ENCODE measurements at regions of chr6 and their contacts with region 1.

Region 1: GRCh38 chr6:134123666-134124208 is 71.3 kb upstream of the SLC2A12 start:
- DNase-seq: no peak
- H3K4me3 ChIP-seq: no peak overlapping the region
- H3K27ac ChIP-seq: no peak overlapping the region
- H3K4me1 ChIP-seq: no peaks in the 10 kb centered on the region
- H3K27me3 ChIP-seq: no peaks in the 10 kb centered on the region
- CTCF ChIP-seq: peak in 2 of 3 experiments; percentile 37 to 52; a peak in 3 of 4 replicates
- EP300 ChIP-seq: no peak
- POLR2A ChIP-seq: no peak; a peak in 1 of 3 replicates
- RAD21 ChIP-seq: peak; percentile 36 to 38

Region 2: DNA sequence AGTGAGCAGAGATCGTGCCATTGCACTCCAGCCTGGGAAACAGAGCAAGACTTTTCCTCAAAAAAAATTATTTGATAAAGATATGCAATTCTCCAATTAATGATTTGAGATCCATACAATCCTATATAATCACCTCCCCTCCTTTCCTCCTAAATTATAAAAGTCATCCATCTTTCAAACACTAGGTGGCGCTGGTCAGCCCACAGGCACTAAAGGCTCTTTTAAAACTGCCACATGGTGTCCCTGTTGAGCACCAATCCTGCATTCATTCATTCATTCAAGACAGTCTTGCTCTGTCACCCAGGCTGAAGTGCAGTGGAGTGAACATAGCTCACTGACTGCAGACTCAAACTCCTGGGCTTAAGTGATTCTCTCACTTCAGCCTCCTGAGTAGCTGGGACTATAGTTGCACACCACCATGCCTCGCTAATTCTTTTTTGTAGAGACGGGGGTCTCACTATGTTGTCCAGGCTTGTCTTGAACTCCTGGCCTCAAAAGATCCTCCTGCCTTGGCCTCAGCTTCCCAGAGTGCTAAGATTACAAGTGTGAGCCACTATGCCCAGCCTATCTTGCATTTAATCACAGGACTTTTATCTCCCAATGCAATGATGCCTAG is 12.6 kb before region 1 on chr6:
- CTCF ChIA-PET with region 1: interaction called, 116 read pairs
- POLR2A ChIA-PET with region 1: interaction called, 3 read pairs
- DNase-seq: no peak
- H3K4me3 ChIP-seq: no peak overlapping the region
- H3K27ac ChIP-seq: no peak overlapping the region
- H3K4me1 ChIP-seq: no peaks in the 10 kb centered on the region
- H3K27me3 ChIP-seq: no peaks in the 10 kb centered on the region
- CTCF ChIP-seq: peak; percentile 59 to 100 (median 96)
- EP300 ChIP-seq: no peak
- POLR2A ChIP-seq: no peak
- RAD21 ChIP-seq: peak; percentile 60 to 69

Region 3: DNA sequence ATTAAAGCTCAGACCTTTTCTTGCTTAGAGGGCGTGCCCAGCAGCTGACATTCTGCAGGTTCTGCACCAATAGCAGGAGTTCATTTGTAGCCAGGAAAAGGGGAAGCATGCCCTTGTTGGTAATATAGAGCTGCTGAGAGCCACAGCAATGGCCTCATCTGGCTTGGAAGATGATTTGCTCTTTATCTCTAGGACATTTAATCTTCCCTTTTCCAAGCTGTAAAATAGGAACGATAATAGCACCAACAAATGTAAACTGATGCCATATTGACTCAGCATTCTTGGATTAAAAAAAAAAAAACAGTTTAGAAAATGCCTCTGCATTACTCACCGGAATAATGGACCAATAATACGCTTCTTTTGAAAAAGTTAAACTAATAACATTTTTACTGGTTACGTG is 22.0 kb after region 1 on chr6:
- CTCF ChIA-PET with region 1: interaction called, 25 read pairs
- POLR2A ChIA-PET with region 1: no interaction called
- DNase-seq: no peak
- H3K4me3 ChIP-seq: no peak overlapping the region
- H3K27ac ChIP-seq: no peak overlapping the region
- H3K4me1 ChIP-seq: peaks cover 0 to 3% (median 0%) of the 10 kb centered on the region in 4 experiments; a peak in 1 of 7 replicates
- H3K27me3 ChIP-seq: no peaks in the 10 kb centered on the region
- CTCF ChIP-seq: no peak
- EP300 ChIP-seq: no peak
- POLR2A ChIP-seq: no peak
- RAD21 ChIP-seq: no peak

Region 4: GRCh38 chr6:134161036-134161435 is 37.3 kb after region 1 on chr6:
- CTCF ChIA-PET with region 1: interaction called, 15 read pairs
- POLR2A ChIA-PET with region 1: no interaction called
- DNase-seq: no peak
- H3K4me3 ChIP-seq: no peak overlapping the region
- H3K27ac ChIP-seq: no peak overlapping the region; the same call in 1 of the 2 replicates
- H3K4me1 ChIP-seq: peaks cover 0 to 3% (median 3%) of the 10 kb centered on the region in 4 experiments; a peak in 4 of 7 replicates
- H3K27me3 ChIP-seq: no peaks in the 10 kb centered on the region
- CTCF ChIP-seq: no peak
- EP300 ChIP-seq: no peak
- POLR2A ChIP-seq: no peak
- RAD21 ChIP-seq: no peak

Measured in H1 (cell line).